ENCODE measurements at regions of chr10 and their contacts with region 1.

Region 1: DNA sequence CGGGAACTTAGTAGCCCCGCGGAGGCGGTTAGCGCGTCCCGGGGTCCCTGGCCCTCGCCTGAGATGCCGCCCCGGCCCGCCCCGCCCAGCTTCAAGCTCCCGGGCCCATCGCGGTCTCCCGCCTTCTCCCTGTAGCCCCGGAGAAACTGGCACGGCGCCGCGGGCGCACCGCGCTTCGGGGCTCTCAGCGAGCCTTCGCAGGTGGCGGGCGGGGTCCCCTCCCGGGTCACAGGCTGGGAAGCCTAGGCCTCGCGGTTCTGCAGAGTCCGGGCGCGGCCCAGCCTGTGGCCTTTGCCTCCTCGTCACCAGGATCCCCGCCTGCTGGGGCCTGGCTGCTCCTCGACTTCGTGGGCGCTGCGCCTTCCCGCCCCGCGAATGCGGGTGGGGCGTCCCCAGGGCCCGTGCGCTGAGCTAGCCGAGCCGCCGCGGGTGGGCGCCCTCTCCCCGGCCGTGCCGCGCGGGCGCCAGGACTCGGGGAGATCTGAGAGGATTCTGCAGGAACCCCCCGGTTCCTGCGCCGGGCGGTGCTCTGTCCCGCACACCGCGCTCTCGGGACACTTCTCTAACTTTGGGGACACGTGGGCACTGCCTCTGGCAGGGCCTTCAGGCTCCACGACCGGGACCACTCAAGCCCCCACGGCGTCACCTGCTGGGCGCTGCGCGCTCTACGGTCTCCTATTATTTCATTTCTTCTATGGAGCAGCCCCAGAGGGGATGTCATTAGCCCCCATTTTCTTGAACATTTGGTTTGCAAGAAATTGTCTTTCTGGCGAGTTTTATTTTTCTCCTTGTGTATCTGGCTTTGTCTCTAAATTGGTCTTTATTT is 682 bp upstream of the RGS10 start:
- DNase-seq: peak; percentile 34 to 83 (median 68)
- ATAC-seq: peak; percentile 43
- H3K4me3 ChIP-seq: peak overlapping the region; percentile 86 to 90
- H3K4me3 Mint-ChIP-seq: peak overlapping the region; percentile 95
- H3K27ac ChIP-seq: peak overlapping the region in 1 of 2 experiments; percentile 83
- H3K27ac Mint-ChIP-seq: peak overlapping the region; percentile 95
- H3K4me1 ChIP-seq: peaks cover 18% of the 10 kb centered on the region
- H3K4me1 Mint-ChIP-seq: peaks cover 42% of the 10 kb centered on the region
- H3K27me3 ChIP-seq: no peaks in the 10 kb centered on the region
- H3K27me3 Mint-ChIP-seq: no peaks in the 10 kb centered on the region
- CTCF ChIP-seq: peak; percentile 72

Region 2: DNA sequence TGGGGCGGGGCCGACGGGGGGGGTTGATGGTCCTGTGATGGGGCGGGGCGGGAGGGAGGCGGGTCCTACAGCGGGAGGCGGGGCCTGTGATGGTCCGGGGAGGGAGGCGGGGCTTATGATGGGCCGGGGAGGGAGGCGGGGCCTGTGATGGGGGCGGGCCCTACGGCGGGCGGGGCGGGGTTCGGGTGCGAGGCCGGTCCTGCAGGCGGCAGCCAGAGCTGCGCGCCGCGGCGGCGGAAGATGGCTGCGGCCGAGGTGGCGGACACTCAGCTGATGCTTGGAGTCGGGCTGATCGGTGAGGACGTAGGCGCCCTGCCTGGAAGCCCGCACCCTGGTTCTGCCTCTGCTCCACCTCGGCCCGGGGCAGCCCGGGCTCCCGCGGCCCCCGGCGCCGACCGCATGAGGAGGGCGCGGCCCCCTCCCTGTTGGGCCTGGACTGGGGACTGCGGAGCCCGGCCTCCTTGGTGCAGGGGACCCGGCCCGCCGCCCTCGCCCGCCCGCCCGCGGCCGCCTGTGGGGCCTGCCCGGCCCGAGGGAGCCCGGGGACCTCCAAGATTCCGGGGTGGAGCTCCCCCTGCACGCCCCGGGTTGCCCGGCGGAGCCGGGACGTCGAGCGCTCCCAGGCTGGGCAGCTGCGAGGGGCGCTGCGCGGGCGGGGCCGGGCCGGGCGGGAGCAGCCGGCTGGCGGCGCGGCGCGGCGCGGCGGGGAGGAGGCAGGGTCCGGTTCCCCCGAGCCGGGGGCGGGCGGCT is 439.1 kb before region 1 on chr10 and contains the start of gene DENND10:
- CTCF ChIA-PET with region 1: no interaction called
- POLR2A ChIA-PET with region 1: no interaction called
- intact Hi-C with region 1: loop called in 1 of 2 experiments (anchors 1 kb)
- DNase-seq: peak; percentile 55 to 88 (median 78)
- ATAC-seq: peak; percentile 85
- H3K4me3 ChIP-seq: peak within 1 kb of the TSS; percentile 46 to 49
- H3K4me3 Mint-ChIP-seq: peak within 1 kb of the TSS; percentile 90
- H3K27ac ChIP-seq: peak within 1 kb of the TSS; percentile 37 to 59
- H3K27ac Mint-ChIP-seq: peak within 1 kb of the TSS; percentile 93
- H3K4me1 ChIP-seq: peaks cover 4% of the 10 kb centered on the region
- H3K4me1 Mint-ChIP-seq: peaks cover 20% of the 10 kb centered on the region
- H3K27me3 ChIP-seq: no peaks in the 10 kb centered on the region
- H3K27me3 Mint-ChIP-seq: no peaks in the 10 kb centered on the region
- CTCF ChIP-seq: no peak
- total RNA-seq, gene DENND10: 28.8 to 30.5 TPM

Region 3: GRCh38 chr10:119305860-119306513 is 237.2 kb before region 1 on chr10:
- CTCF ChIA-PET with region 1: no interaction called
- POLR2A ChIA-PET with region 1: no interaction called
- intact Hi-C with region 1: loop called in 1 of 2 experiments (anchors 2 kb)
- DNase-seq: peak; percentile 49 to 94 (median 86)
- ATAC-seq: peak; percentile 79
- H3K4me3 ChIP-seq: peak overlapping the region; percentile 50 to 57
- H3K4me3 Mint-ChIP-seq: peak overlapping the region; percentile 89
- H3K27ac ChIP-seq: peak overlapping the region; percentile 63 to 90
- H3K27ac Mint-ChIP-seq: peak overlapping the region; percentile 97
- H3K4me1 ChIP-seq: peaks cover 57% of the 10 kb centered on the region
- H3K4me1 Mint-ChIP-seq: peaks cover 67% of the 10 kb centered on the region
- H3K27me3 ChIP-seq: peaks cover 0 to 3% of the 10 kb centered on the region in 2 experiments
- H3K27me3 Mint-ChIP-seq: no peaks in the 10 kb centered on the region
- CTCF ChIP-seq: no peak

Region 4: GRCh38 chr10:119502209-119502608 is 41.0 kb before region 1 on chr10:
- CTCF ChIA-PET with region 1: interaction called, 52 read pairs
- POLR2A ChIA-PET with region 1: interaction called, 51 read pairs
- intact Hi-C with region 1: loop called (anchors 1 to 2 kb)
- DNase-seq: peak; percentile 64 to 97 (median 88)
- ATAC-seq: peak; percentile 82
- H3K4me3 ChIP-seq: peak overlapping the region; percentile 0 to 18
- H3K4me3 Mint-ChIP-seq: peak overlapping the region; percentile 79
- H3K27ac ChIP-seq: peak overlapping the region; percentile 73 to 77
- H3K27ac Mint-ChIP-seq: peak overlapping the region; percentile 99
- H3K4me1 ChIP-seq: peaks cover 94% of the 10 kb centered on the region
- H3K4me1 Mint-ChIP-seq: peaks cover 91% of the 10 kb centered on the region
- H3K27me3 ChIP-seq: no peaks in the 10 kb centered on the region
- H3K27me3 Mint-ChIP-seq: no peaks in the 10 kb centered on the region
- CTCF ChIP-seq: no peak

Region 5: GRCh38 chr10:119650692-119651513 is 107.7 kb after region 1 on chr10 and contains the start of gene BAG3:
- CTCF ChIA-PET with region 1: interaction called, 7 read pairs
- POLR2A ChIA-PET with region 1: no interaction called
- intact Hi-C with region 1: loop called (anchors 1 kb)
- DNase-seq: peak; percentile 57 to 88 (median 76)
- ATAC-seq: peak; percentile 76
- H3K4me3 ChIP-seq: peak within 1 kb of the TSS; percentile 94 to 95
- H3K4me3 Mint-ChIP-seq: peak within 1 kb of the TSS; percentile 98
- H3K27ac ChIP-seq: peak within 1 kb of the TSS; percentile 78 to 88
- H3K27ac Mint-ChIP-seq: peak within 1 kb of the TSS; percentile 95
- H3K4me1 ChIP-seq: peaks cover 36% of the 10 kb centered on the region
- H3K4me1 Mint-ChIP-seq: peaks cover 44% of the 10 kb centered on the region
- H3K27me3 ChIP-seq: no peaks in the 10 kb centered on the region
- H3K27me3 Mint-ChIP-seq: no peaks in the 10 kb centered on the region
- CTCF ChIP-seq: no peak
- total RNA-seq, gene BAG3: 20.6 to 21.8 TPM

Measured in CD8-positive, alpha-beta T cell (primary cell).